Breast epithelium (tissue), 4 donors: ENCODE measurements at regions of chr12 and their contacts with region 1.

Region 1: DNA sequence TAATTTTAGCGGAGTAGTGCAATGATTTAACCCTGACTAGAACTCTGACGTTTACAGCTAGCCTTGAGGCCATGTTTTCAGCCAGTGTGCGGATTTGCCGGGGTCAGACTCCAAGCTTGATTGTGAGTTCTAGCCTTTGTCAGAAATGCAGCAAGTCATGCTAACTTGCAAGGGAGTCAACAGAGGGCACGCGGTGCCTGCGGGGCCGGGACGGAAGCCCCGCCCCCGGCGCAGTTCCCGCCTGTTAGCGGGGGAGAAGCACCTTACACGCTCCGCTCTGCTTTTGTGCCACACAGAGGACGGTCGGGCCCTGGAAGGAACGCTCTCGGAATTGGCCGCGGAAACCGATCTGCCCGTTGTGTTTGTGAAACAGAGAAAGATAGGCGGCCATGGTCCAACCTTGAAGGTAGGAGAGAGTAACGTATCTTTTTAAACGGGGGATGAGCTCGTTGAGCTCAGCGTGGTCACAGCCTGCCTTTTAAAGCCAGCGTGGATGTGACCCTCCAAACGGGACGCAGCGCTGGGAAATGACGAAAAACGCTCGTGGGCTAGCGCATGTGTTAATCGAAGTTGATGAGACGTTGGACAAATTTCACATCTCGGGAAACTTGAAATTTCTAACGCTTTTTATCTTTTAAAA is 14.8 kb upstream of the EID3 start:
- DNase-seq: peak; percentile 79 to 82
- H3K4me3 ChIP-seq: peak overlapping the region; percentile 59 to 82 (median 60)
- H3K27ac ChIP-seq: peak overlapping the region; percentile 89 to 94
- H3K4me1 ChIP-seq: peaks cover 0 to 9% of the 10 kb centered on the region in 2 donors
- H3K27me3 ChIP-seq: no peaks in the 10 kb centered on the region
- CTCF ChIP-seq: no peak
- POLR2A ChIP-seq: peak; percentile 64

Region 2: DNA sequence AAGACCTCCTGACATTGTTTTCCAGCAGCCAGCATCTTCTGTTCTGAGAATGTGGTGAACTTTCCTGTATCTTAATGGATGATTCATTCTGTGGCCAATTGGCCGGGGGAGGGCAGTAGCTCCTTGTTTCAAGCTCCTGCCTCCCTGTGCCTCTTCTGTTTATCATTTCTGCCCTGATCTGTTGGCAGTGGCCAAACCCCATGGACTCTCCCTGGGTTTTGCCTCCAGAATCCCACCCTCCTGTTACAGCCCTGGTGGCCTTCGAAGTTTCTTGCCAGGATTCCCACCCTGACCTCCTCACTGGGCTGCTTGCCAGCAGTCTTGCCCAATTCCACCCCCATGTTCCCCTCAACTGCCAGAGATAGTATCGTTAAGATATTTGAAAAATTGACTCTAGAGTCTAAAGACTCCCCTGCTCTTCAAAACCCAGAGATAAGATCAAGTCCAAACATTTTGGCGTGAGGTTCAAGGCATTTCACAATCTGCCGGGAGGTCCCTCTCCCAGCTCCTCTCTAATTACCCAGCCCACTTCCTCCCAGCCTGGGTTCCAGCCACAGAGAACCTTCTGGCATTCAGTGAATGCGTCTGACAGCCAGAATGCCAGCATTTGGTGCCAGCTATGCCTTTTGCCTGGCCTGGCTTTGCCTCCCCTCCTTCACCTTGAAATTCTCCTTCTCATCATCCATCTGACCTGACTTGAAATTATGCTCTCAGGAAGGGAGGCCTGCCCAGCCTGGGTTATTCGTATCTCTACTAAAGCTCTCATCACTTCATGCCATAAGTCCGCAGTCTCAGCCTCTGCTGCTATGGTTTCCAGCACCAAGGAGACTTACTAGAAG is 110.9 kb before region 1 on chr12:
- intact Hi-C with region 1: no loop called
- DNase-seq: peak; percentile 61 to 91
- H3K4me3 ChIP-seq: peak overlapping the region in 2 of 3 donors; percentile 12 to 40
- H3K27ac ChIP-seq: peak overlapping the region; percentile 87 to 94
- H3K4me1 ChIP-seq: peaks cover 24 to 26% of the 10 kb centered on the region in 2 donors
- H3K27me3 ChIP-seq: no peaks in the 10 kb centered on the region
- CTCF ChIP-seq: peak in 1 of 3 donors; percentile 22
- POLR2A ChIP-seq: no peak

Region 3: DNA sequence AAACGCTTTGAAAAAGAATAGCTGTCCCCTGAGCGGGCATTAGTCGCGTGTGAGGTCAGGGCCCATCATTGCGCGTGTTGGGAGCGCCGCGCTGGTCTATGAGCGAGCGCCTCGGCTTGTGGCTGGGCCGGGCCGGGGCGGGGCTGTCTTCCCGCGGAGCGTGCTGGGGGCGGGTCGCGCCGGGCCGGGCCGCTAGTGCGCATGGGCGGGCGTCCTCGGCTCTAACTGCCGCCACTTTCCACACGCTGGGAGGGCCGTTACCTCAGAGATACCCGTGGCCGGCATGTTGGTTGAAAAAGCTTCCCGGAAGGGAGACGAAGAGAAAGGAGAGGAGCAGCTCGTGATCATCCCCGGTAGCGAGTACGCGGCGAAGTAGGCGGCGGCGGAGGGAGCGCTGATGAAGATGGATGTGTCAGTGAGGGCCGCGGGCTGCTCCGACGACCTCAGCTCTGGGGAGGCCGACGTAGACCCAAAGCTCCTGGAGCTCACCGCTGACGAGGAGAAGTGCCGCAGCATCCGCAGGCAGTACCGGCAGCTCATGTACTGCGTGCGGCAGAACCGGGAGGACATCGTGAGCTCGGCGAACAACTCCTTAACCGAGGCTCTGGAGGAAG is 14.9 kb after region 1 on chr12 and contains the start of gene EID3:
- intact Hi-C with region 1: loop called (anchors 1 kb)
- DNase-seq: peak; percentile 78 to 86
- H3K4me3 ChIP-seq: peak within 1 kb of the TSS; percentile 42 to 81 (median 51)
- H3K27ac ChIP-seq: peak within 1 kb of the TSS; percentile 80 to 92
- H3K4me1 ChIP-seq: peaks cover 0 to 2% of the 10 kb centered on the region in 2 donors
- H3K27me3 ChIP-seq: no peaks in the 10 kb centered on the region
- CTCF ChIP-seq: no peak
- POLR2A ChIP-seq: no peak
- total RNA-seq, gene EID3: 6.7 to 13.3 (median 12.1) TPM